Psoas muscle (tissue), 8 donors: ENCODE measurements at regions of chr10 and their contacts with region 1.

Region 1: GRCh38 chr10:68742397-68742796 is 21.4 kb downstream of the CCAR1 start:
- DNase-seq: no peak
- ATAC-seq: peak in 1 of 4 donors; percentile 51
- H3K4me3 ChIP-seq: no peak overlapping the region
- H3K27ac ChIP-seq: peak overlapping the region; percentile 54
- H3K4me1 ChIP-seq: peaks cover 14% of the 10 kb centered on the region
- H3K27me3 ChIP-seq: no peaks in the 10 kb centered on the region
- CTCF ChIP-seq: no peak

Region 2: DNA sequence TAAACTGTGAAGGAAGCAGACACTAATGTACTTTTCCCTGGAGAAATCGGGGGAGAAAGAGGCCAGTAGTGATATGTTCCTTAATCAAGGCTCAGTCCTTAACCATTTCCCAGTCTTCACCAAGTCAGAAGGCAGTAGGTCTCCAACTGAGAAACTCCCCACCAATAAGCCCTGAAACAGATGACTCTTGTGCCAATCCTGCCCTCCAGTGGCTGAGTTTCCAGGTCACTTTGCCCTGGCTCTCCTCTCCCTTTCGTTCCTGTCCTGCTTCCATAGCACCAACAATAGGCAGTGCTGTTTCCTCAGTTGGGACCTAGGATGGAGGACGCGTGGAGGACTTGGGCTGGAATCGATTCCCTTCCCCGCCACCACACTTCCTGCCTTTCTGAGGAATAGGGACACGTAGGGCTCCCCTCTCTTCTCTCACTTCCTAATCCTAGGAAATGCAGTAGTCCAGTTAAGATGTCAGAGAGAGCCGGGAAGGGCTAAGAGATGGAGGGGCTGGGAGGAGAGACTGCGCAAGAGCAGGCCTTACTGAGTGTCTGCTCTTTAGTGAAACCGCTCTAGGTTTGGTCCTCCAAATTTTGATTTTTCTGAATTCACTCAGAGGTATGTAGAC is 533.9 kb before region 1 on chr10:
- intact Hi-C with region 1: no loop called
- DNase-seq: no peak
- ATAC-seq: peak in 2 of 4 donors; percentile 14 to 15
- H3K4me3 ChIP-seq: no peak overlapping the region
- H3K27ac ChIP-seq: no peak overlapping the region
- H3K4me1 ChIP-seq: peaks cover 8% of the 10 kb centered on the region
- H3K27me3 ChIP-seq: no peaks in the 10 kb centered on the region
- CTCF ChIP-seq: peak; percentile 13

Region 3: DNA sequence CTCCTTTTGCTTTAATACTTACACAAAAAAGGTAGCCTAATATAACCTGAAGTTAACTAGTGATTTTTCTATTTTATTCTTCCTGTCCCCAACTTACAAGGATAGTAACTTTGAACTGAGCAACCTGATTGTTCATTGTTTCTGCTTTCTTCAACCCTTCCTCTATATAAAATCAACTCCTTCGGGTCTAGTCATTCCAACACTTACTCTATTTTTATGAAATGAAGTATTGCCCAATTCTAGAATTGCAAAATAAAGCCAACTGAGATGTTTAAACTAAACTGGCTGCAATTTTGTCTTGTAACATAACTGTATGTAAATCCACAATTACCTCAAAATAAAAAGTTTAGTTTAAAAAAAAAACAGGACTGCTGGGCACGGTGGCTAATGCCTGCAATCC is 250.3 kb before region 1 on chr10:
- intact Hi-C with region 1: loop called in 1 of 2 experiments (anchors 10 kb)
- DNase-seq: no peak
- ATAC-seq: no peak
- H3K4me3 ChIP-seq: no peak overlapping the region
- H3K27ac ChIP-seq: no peak overlapping the region
- H3K4me1 ChIP-seq: no peaks in the 10 kb centered on the region
- H3K27me3 ChIP-seq: no peaks in the 10 kb centered on the region
- CTCF ChIP-seq: no peak

Region 4: GRCh38 chr10:69146759-69147158 is 404.4 kb after region 1 on chr10:
- intact Hi-C with region 1: no loop called
- DNase-seq: no peak
- ATAC-seq: no peak
- H3K4me3 ChIP-seq: no peak overlapping the region
- H3K27ac ChIP-seq: no peak overlapping the region
- H3K4me1 ChIP-seq: peaks cover 16% of the 10 kb centered on the region
- H3K27me3 ChIP-seq: no peaks in the 10 kb centered on the region
- CTCF ChIP-seq: no peak